ENCODE measurements at regions of chr2 and their contacts with region 1.

Region 1: DNA sequence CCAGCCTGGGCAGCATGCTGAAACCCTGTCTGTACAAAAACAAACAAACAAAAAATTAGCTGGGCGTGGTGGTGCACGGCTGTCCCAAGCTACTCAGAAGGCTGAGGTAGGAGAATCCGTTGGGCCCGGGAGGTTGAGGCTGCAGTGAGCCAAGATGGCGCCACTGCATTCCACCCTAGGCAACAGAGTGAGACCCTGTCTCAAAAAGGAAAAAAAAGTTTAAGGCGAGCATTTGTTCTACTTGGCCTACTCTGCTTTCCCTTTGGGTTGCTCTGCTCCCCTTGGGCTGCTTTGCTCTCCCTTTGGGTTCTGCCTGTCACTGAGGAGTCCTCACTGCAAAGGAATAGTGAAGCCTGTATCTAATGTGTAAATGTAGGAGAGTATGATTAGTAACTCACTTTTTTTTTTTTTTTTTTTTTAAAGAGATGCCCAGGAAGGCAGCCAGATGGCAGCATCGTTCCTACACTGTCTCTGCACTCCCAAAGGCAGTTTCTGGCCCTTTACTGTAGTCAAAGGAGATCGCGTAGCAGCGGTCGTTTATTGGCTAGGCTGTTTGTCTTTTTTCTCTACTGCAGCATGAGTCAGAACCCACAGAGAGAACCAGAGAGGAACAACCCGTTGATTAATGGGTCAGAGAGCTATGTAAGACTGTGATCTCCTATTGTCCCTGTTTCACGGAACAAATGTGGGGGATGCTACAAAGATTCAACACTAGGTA is 118.3 kb upstream of the CWC22 start:
- DNase-seq: peak; percentile 28
- CTCF ChIP-seq: peak; percentile 55

Region 2: GRCh38 chr2:181046833-181047232 is 921.4 kb after region 1 on chr2:
- in situ Hi-C with region 1: loop called (anchors 10 kb)
- DNase-seq: no peak
- CTCF ChIP-seq: no peak

Region 3: GRCh38 chr2:181715033-181715630 is 1589.7 kb after region 1 on chr2:
- in situ Hi-C with region 1: loop called (anchors 25 kb)
- DNase-seq: peak; percentile 56
- CTCF ChIP-seq: peak; percentile 74

Measured in GM13977 (cell line).